GM12878 (cell line): ENCODE measurements at regions of chr2 and their contacts with region 1.

Region 1: GRCh38 chr2:237512774-237513466 is 25.9 kb downstream of the MLPH start:
- DNase-seq: peak; percentile 28
- ATAC-seq: peak; percentile 97
- H3K4me3 ChIP-seq: no peak overlapping the region
- H3K27ac ChIP-seq: no peak overlapping the region
- H3K4me1 ChIP-seq: no peaks in the 10 kb centered on the region
- H3K27me3 ChIP-seq: peaks cover 0 to 2% of the 10 kb centered on the region in 2 experiments; a peak in 2 of 4 replicates
- CTCF ChIP-seq: peak; percentile 85 to 99 (median 88); a peak in 5 of 6 replicates
- EP300 ChIP-seq: no peak
- POLR2A ChIP-seq: no peak
- RAD21 ChIP-seq: peak; percentile 96

Region 2: DNA sequence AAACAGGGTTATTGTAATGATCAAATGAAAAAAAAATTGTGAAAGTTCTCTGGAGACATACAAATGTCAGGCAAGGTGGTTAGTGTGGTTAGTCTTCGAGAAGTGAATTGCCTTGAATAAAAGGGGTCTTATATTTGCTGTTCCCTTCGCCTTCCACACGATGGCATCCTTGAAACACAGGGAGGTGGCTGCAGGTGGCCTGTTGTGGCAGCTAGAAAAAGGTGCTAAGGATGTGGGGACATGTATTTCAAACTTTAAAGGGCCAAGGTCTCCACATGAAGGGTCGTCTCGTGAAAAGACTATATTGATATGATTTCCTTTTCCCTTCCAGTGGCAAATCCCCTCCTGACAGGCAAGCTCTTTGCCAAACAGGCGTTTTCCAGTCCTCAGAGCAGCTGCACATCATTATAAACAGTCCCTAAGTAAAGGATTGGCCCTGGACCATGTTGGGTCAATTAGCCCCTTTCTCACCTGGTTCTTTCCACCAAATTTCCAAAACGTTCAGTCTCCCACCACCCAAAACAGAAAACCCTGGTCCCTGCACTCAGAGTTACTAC is 358.8 kb before region 1 on chr2:
- CTCF ChIA-PET with region 1: interaction called, 9 read pairs
- POLR2A ChIA-PET with region 1: no interaction called
- RAD21 ChIA-PET with region 1: interaction called, 6 read pairs
- SMC1A ChIA-PET with region 1: interaction called, 6 read pairs
- in situ Hi-C with region 1: no loop called
- intact Hi-C with region 1: loop called (anchors 1 kb)
- DNase-seq: no peak
- ATAC-seq: peak; percentile 61
- H3K4me3 ChIP-seq: no peak overlapping the region
- H3K27ac ChIP-seq: no peak overlapping the region
- H3K4me1 ChIP-seq: peaks cover 16% of the 10 kb centered on the region
- H3K27me3 ChIP-seq: no peaks in the 10 kb centered on the region
- CTCF ChIP-seq: peak; percentile 75 to 81 (median 79)
- EP300 ChIP-seq: no peak
- POLR2A ChIP-seq: no peak
- RAD21 ChIP-seq: peak; percentile 98

Region 3: GRCh38 chr2:237343993-237344392 is 168.9 kb before region 1 on chr2:
- CTCF ChIA-PET with region 1: no interaction called
- POLR2A ChIA-PET with region 1: no interaction called
- RAD21 ChIA-PET with region 1: no interaction called
- SMC1A ChIA-PET with region 1: no interaction called
- in situ Hi-C with region 1: no loop called
- intact Hi-C with region 1: no loop called
- DNase-seq: no peak
- ATAC-seq: no peak
- H3K4me3 ChIP-seq: no peak overlapping the region
- H3K27ac ChIP-seq: no peak overlapping the region
- H3K4me1 ChIP-seq: no peaks in the 10 kb centered on the region
- H3K27me3 ChIP-seq: no peaks in the 10 kb centered on the region; a peak in 3 of 4 replicates
- CTCF ChIP-seq: no peak
- EP300 ChIP-seq: no peak
- POLR2A ChIP-seq: no peak
- RAD21 ChIP-seq: no peak

Region 4: DNA sequence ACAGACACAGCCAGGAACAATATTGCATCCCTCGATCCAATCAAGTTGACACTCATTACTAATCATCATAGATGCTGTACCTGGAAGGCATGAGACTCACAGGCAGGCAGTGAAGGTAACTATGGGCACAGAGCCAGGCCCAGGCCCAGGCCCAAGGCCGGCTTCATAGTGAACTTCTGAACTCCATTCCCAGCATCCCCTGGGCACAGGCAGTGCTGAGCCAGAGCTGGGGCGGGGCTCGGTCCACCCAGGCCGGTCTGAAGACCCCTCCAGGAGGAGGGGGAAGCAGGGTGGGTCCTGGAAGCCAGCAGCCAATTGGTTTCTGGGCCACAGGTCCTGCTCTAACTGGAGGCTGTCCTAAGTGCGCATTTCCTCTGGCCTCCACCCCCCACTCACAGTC is 11.7 kb after region 1 on chr2:
- CTCF ChIA-PET with region 1: interaction called, 14 read pairs
- POLR2A ChIA-PET with region 1: no interaction called
- RAD21 ChIA-PET with region 1: interaction called, 8 read pairs
- SMC1A ChIA-PET with region 1: interaction called, 14 read pairs
- in situ Hi-C with region 1: no loop called
- intact Hi-C with region 1: no loop called
- DNase-seq: no peak
- ATAC-seq: no peak
- H3K4me3 ChIP-seq: no peak overlapping the region
- H3K27ac ChIP-seq: no peak overlapping the region
- H3K4me1 ChIP-seq: peaks cover 12% of the 10 kb centered on the region
- H3K27me3 ChIP-seq: no peaks in the 10 kb centered on the region
- CTCF ChIP-seq: no peak
- EP300 ChIP-seq: no peak
- POLR2A ChIP-seq: no peak
- RAD21 ChIP-seq: no peak

Region 5: GRCh38 chr2:237540823-237541222 is 27.9 kb after region 1 on chr2:
- CTCF ChIA-PET with region 1: interaction called, 18 read pairs
- POLR2A ChIA-PET with region 1: interaction called, 3 read pairs
- RAD21 ChIA-PET with region 1: interaction called, 13 read pairs
- SMC1A ChIA-PET with region 1: interaction called, 4 read pairs
- in situ Hi-C with region 1: no loop called
- intact Hi-C with region 1: no loop called
- DNase-seq: no peak
- ATAC-seq: peak; percentile 75
- H3K4me3 ChIP-seq: no peak overlapping the region
- H3K27ac ChIP-seq: no peak overlapping the region
- H3K4me1 ChIP-seq: peaks cover 6% of the 10 kb centered on the region; the same call in 1 of the 2 replicates
- H3K27me3 ChIP-seq: peaks cover 0 to 3% of the 10 kb centered on the region in 2 experiments; a peak in 1 of 4 replicates
- CTCF ChIP-seq: no peak
- EP300 ChIP-seq: no peak
- POLR2A ChIP-seq: no peak
- RAD21 ChIP-seq: no peak

Region 6: GRCh38 chr2:237581751-237582746 is 69.1 kb after region 1 on chr2:
- CTCF ChIA-PET with region 1: interaction called, 16 read pairs
- POLR2A ChIA-PET with region 1: no interaction called
- RAD21 ChIA-PET with region 1: interaction called, 7 read pairs
- SMC1A ChIA-PET with region 1: interaction called, 6 read pairs
- in situ Hi-C with region 1: no loop called
- intact Hi-C with region 1: no loop called
- DNase-seq: peak; percentile 35
- ATAC-seq: peak; percentile 90
- H3K4me3 ChIP-seq: no peak overlapping the region
- H3K27ac ChIP-seq: no peak overlapping the region
- H3K4me1 ChIP-seq: no peaks in the 10 kb centered on the region
- H3K27me3 ChIP-seq: no peaks in the 10 kb centered on the region; a peak in 1 of 4 replicates
- CTCF ChIP-seq: peak; percentile 38 to 73 (median 53); a peak in 5 of 6 replicates
- EP300 ChIP-seq: no peak
- POLR2A ChIP-seq: no peak
- RAD21 ChIP-seq: peak; percentile 72

Region 7: DNA sequence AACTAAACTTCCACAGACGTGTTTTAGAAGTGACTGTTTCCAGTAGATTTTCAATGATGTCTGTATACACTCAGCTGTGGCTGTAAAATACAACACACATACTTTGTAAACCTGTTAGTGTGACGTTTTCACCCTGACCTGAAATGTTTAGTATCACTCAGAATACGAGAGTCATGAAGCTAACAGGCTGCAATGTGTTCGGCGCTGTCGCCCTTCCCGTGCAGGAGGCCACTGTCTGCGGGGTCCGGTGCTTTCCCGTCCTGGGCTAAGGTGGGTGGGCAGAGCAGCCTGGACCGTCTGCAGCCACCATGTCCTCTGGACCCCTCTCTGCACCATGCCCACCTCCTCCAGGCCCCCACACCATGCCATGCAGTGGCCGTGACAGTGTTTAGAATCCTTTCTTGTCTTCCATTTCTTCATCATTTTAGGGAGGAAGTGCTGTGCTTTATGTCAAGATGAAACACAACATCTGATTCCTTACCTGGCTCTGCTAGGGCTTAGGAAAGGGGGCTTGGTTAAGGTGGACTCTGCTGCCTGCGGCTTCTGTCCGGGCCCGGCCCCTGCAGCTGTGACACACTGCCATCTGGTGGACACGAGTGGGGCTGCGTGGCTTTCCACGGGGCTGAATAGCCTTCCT is 231.8 kb after region 1 on chr2:
- CTCF ChIA-PET with region 1: interaction called, 13 read pairs
- POLR2A ChIA-PET with region 1: interaction called, 4 read pairs
- RAD21 ChIA-PET with region 1: interaction called, 6 read pairs
- SMC1A ChIA-PET with region 1: interaction called, 7 read pairs
- in situ Hi-C with region 1: no loop called
- intact Hi-C with region 1: loop called (anchors 10 kb)
- DNase-seq: no peak
- ATAC-seq: peak; percentile 97
- H3K4me3 ChIP-seq: no peak overlapping the region
- H3K27ac ChIP-seq: no peak overlapping the region
- H3K4me1 ChIP-seq: no peaks in the 10 kb centered on the region
- H3K27me3 ChIP-seq: no peaks in the 10 kb centered on the region
- CTCF ChIP-seq: peak; percentile 93 to 97 (median 95)
- EP300 ChIP-seq: no peak
- POLR2A ChIP-seq: peak; percentile 53
- RAD21 ChIP-seq: peak; percentile 93